AG04450 (cell line): ENCODE measurements at regions of chr2 and their contacts with region 1.

Region 1: GRCh38 chr2:175251425-175252041 is 70.0 kb upstream of the ATP5MC3 start:
- DNase-seq: no peak
- H3K4me3 ChIP-seq: no peak overlapping the region
- H3K27ac ChIP-seq: no peak overlapping the region
- H3K27me3 ChIP-seq: peaks cover 14% of the 10 kb centered on the region
- CTCF ChIP-seq: peak; percentile 76

Region 2: GRCh38 chr2:175030380-175031271 is 220.9 kb before region 1 on chr2:
- CTCF ChIA-PET with region 1: interaction called, 12 read pairs
- POLR2A ChIA-PET with region 1: no interaction called
- DNase-seq: peak; percentile 8
- H3K4me3 ChIP-seq: no peak overlapping the region
- H3K27ac ChIP-seq: peak overlapping the region; percentile 0
- H3K27me3 ChIP-seq: no peaks in the 10 kb centered on the region
- CTCF ChIP-seq: peak; percentile 59

Region 3: GRCh38 chr2:175227393-175227792 is 24.1 kb before region 1 on chr2:
- CTCF ChIA-PET with region 1: interaction called, 20 read pairs
- POLR2A ChIA-PET with region 1: interaction called, 5 read pairs
- DNase-seq: no peak
- H3K4me3 ChIP-seq: no peak overlapping the region
- H3K27ac ChIP-seq: no peak overlapping the region
- H3K27me3 ChIP-seq: no peaks in the 10 kb centered on the region
- CTCF ChIP-seq: no peak

Region 4: GRCh38 chr2:175275539-175275938 is 24.0 kb after region 1 on chr2:
- CTCF ChIA-PET with region 1: interaction called, 70 read pairs
- POLR2A ChIA-PET with region 1: no interaction called
- DNase-seq: no peak
- H3K4me3 ChIP-seq: no peak overlapping the region
- H3K27ac ChIP-seq: no peak overlapping the region
- H3K27me3 ChIP-seq: peaks cover 3% of the 10 kb centered on the region
- CTCF ChIP-seq: no peak

Region 5: GRCh38 chr2:175326801-175327200 is 75.3 kb after region 1 on chr2:
- CTCF ChIA-PET with region 1: interaction called, 22 read pairs
- POLR2A ChIA-PET with region 1: no interaction called
- DNase-seq: no peak
- H3K4me3 ChIP-seq: no peak overlapping the region
- H3K27ac ChIP-seq: no peak overlapping the region
- H3K27me3 ChIP-seq: no peaks in the 10 kb centered on the region
- CTCF ChIP-seq: no peak